ENCODE measurements at regions of chrX and their contacts with region 1.

Region 1: DNA sequence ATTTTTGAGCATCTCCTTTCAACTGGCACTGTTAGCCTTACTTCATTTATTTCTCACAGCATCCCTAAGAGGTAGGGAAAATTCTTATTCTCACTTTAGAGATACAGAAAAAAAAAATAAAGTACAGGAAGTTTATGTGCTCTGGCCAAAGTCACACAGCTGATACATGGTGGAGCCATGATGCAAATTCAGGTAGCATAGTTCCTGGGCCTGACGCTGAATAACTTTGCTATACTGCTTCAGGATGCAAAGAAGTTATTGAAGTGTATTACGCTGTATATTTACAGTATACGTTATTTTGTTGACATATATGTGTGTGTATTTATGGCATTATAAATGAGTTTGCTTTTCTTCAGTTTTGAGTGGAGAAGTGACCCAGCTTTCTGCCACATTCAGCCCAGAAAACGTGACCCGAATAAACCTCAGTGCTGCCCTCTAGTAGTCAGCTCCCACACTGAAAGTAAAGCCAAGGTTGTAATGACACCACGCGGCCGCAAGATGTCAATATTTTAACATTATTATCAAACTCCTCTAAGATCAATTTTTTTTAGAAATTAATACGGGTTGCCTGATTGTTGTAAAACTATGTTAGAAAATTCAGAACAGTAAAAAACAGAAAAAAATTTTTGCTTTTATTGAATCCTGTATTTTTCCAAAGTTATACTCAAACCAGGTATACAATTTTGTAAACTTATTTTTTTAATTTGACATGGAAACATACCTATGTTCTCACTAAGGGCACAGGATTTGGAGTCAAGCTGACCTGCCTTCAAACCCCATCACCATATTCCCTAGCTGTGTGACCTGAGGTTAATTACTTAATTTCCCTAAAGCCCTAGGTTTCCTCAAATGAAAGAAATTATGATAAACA is 3.8 kb upstream of the GUCY2F start:
- DNase-seq: peak; percentile 71
- ATAC-seq: no peak
- H3K4me3 ChIP-seq: no peak overlapping the region
- H3K27ac ChIP-seq: no peak overlapping the region
- H3K4me1 ChIP-seq: no peaks in the 10 kb centered on the region
- H3K27me3 ChIP-seq: peaks cover 17% of the 10 kb centered on the region
- CTCF ChIP-seq: peak; percentile 96

Region 2: DNA sequence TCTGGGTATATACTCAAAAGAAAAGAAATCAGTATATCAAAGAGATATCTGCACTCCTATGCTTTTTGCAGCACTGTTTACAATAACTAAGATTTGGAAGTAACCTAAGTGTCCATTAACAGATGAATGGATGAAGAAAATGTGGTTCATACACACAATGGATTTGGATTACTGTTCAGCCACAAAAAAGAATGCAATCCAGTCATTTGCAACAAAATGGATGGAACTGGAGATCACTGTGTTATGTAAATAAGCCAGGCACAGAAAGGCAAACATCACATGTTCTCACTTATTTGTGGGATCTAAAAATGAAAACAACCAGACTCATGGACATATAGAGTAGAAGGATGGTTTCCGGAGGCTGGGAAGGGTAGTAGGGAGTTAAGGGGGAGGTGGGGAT is 33.3 kb after region 1 on chrX:
- CTCF ChIA-PET with region 1: no interaction called
- POLR2A ChIA-PET with region 1: no interaction called
- intact Hi-C with region 1: no loop called
- DNase-seq: no peak
- ATAC-seq: no peak
- H3K4me3 ChIP-seq: no peak overlapping the region
- H3K27ac ChIP-seq: no peak overlapping the region
- H3K4me1 ChIP-seq: no peaks in the 10 kb centered on the region
- H3K27me3 ChIP-seq: peaks cover 18% of the 10 kb centered on the region; the same call in 1 of the 2 replicates
- CTCF ChIP-seq: no peak

Region 3: GRCh38 chrX:109536439-109537336 is 51.0 kb after region 1 on chrX and contains the start of gene NXT2:
- CTCF ChIA-PET with region 1: no interaction called
- POLR2A ChIA-PET with region 1: no interaction called
- intact Hi-C with region 1: loop called (anchors 5 kb)
- DNase-seq: peak; percentile 90
- ATAC-seq: peak; percentile 97
- H3K4me3 ChIP-seq: peak within 1 kb of the TSS; percentile 81
- H3K27ac ChIP-seq: peak within 1 kb of the TSS; percentile 91
- H3K4me1 ChIP-seq: peaks cover 20% of the 10 kb centered on the region
- H3K27me3 ChIP-seq: no peaks in the 10 kb centered on the region
- CTCF ChIP-seq: no peak
- total RNA-seq, gene NXT2: 10.7 and 13.9 TPM in 2 replicates

Region 4: GRCh38 chrX:109632906-109633504 is 147.3 kb after region 1 on chrX:
- CTCF ChIA-PET with region 1: interaction called, 4 read pairs
- POLR2A ChIA-PET with region 1: no interaction called
- intact Hi-C with region 1: loop called (anchors 1 kb)
- DNase-seq: peak; percentile 52
- ATAC-seq: no peak
- H3K4me3 ChIP-seq: no peak overlapping the region
- H3K27ac ChIP-seq: no peak overlapping the region
- H3K4me1 ChIP-seq: no peaks in the 10 kb centered on the region
- H3K27me3 ChIP-seq: no peaks in the 10 kb centered on the region
- CTCF ChIP-seq: peak; percentile 55

Region 5: DNA sequence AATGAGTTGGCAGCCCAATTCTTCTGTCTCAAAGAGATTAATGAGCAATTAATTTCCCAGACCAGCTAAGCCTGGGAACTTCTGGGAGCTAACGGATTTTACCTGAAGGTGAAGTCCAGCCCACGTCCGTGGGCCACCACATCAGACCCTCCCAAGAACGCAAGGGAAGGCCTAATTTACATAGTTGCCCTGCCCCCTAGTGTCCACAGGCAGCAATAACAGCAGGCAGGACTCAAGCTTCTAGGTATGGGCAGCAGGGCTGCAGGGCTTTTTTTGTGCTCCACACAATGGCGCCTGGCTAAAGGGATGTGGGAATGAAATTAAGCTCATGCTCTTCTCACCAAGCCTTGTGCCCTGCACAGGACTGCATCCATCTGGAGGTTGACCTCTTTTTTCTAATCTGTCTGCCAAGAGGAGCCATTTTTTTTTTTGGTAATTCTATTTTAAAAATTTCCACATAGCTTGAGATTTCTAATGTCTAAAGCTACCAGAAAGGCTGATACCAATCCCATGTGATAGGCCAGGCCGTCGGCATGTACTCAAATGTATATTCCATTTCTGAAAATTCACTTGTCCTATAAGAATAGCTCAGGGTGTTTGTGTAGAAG is 405.3 kb after region 1 on chrX:
- CTCF ChIA-PET with region 1: interaction called, 3 read pairs
- POLR2A ChIA-PET with region 1: no interaction called
- intact Hi-C with region 1: loop called (anchors 2 kb)
- DNase-seq: peak; percentile 74
- ATAC-seq: peak; percentile 84
- H3K4me3 ChIP-seq: no peak overlapping the region
- H3K27ac ChIP-seq: no peak overlapping the region
- H3K4me1 ChIP-seq: no peaks in the 10 kb centered on the region
- H3K27me3 ChIP-seq: no peaks in the 10 kb centered on the region
- CTCF ChIP-seq: peak; percentile 89

Region 6: DNA sequence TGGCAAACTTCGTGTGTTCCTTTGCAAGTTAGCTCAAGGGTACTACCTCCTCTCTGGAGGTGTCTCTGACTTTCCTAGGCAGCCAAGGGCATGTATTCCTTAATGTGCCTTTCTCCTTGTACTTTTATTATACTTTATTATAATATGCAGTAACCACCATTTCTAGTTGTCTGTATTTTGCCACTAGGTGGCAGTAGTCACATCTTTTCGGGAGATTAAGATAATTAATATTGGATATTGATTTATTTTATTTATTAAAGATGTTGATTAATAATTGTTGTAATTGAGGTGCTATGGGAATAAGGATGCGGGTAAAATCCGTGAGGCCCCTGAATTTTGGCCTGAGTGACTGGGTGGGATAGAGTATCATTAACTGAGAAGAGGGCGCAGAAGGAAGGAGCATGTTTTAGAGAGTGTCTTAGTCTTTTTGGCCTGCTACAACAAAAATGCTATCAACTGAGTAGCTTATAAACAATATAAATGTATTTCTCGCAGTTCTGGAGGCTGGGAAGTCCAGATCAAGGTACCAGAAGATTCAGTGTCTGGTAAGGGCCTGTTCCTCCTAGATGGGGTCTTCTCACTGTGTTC is 670.6 kb after region 1 on chrX:
- CTCF ChIA-PET with region 1: no interaction called
- POLR2A ChIA-PET with region 1: no interaction called
- intact Hi-C with region 1: no loop called
- DNase-seq: peak; percentile 52
- ATAC-seq: no peak
- H3K4me3 ChIP-seq: no peak overlapping the region
- H3K27ac ChIP-seq: no peak overlapping the region
- H3K4me1 ChIP-seq: peaks cover 7% of the 10 kb centered on the region
- H3K27me3 ChIP-seq: no peaks in the 10 kb centered on the region
- CTCF ChIP-seq: peak; percentile 54

Measured in PC-3 (cell line).